ENCODE measurements at regions of chr14 and their contacts with region 1.

Region 1: DNA sequence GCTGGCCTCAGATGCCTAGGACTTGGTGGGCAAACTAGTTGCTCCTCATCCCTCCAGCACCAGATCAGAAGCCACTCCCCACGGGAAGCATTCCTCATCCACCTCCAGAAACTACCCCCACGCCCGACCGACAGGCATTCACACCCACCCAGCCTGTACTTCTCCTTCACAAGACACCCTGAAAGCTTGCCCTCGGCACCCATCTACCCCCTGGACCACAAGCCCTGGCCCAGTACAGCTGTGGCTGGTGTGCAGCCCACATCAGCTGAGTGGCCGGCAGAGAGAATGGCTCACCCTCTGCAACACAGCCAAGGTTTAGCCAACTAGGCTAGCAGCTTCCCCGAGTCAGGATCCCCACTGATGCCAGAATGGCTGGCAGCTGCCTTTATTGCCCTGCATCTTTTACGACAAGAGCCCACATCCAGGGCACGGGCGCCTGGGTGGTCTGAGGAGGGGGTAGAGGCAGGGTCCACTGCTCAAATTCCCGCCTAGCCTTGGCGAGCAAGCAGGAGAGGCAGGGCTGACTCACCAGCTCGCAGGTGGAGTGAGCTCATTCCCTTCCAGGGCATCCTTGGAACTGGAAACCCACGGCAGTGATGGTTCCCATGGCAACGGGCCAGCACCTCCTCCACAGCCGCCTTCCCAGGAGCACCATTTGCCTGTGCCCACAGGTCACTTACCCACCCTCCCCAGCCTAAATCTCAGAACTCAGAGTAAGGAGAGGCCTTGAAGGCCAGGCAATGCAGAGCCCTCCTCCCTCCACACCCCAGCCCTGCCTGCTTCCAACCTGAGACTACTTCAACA is 17.1 kb downstream of the ACTN1 start:
- DNase-seq: no peak
- H3K4me3 ChIP-seq: peak overlapping the region in 1 of 3 donors; percentile 9
- H3K27ac ChIP-seq: peak overlapping the region; percentile 74 to 81
- H3K4me1 ChIP-seq: peaks cover 20 to 64% of the 10 kb centered on the region in 2 donors
- H3K27me3 ChIP-seq: no peaks in the 10 kb centered on the region
- CTCF ChIP-seq: no peak
- POLR2A ChIP-seq: no peak

Region 2: GRCh38 chr14:68548194-68549056 is 413.6 kb before region 1 on chr14:
- intact Hi-C with region 1: loop called (anchors 5 kb)
- DNase-seq: peak; percentile 83 to 91
- H3K4me3 ChIP-seq: peak overlapping the region in 2 of 3 donors; percentile 39 to 48
- H3K27ac ChIP-seq: peak overlapping the region; percentile 95 to 98
- H3K4me1 ChIP-seq: peaks cover 15 to 34% of the 10 kb centered on the region in 2 donors
- H3K27me3 ChIP-seq: no peaks in the 10 kb centered on the region
- CTCF ChIP-seq: no peak
- POLR2A ChIP-seq: no peak

Measured in breast epithelium (tissue), 4 donors.